ENCODE measurements at regions of chr18 and their contacts with region 1.

Region 1: DNA sequence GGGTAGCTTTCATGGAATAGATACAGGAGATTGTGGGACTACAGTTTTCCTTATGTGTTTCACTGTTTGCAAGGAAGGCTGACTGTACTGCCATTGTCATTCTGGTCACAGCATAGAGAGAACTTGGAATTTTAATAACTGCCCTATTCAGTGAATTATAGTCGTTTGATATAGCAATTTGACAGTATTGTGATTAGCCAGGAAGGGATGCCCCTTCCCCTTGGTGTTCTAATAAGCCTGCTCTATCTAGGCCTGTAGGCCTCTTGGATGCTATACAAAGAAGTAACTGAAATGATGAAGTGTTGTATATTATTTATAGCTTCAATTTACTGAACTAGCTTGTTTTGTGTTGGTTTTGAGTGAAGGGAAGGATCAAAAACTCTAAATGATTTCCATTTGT is 528.6 kb upstream of the CDH2 start:
- DNase-seq: no peak
- ATAC-seq: no peak
- H3K4me3 Mint-ChIP-seq: no peak overlapping the region
- H3K27ac Mint-ChIP-seq: no peak overlapping the region
- H3K4me1 Mint-ChIP-seq: no peaks in the 10 kb centered on the region
- H3K27me3 Mint-ChIP-seq: no peaks in the 10 kb centered on the region

Region 2: DNA sequence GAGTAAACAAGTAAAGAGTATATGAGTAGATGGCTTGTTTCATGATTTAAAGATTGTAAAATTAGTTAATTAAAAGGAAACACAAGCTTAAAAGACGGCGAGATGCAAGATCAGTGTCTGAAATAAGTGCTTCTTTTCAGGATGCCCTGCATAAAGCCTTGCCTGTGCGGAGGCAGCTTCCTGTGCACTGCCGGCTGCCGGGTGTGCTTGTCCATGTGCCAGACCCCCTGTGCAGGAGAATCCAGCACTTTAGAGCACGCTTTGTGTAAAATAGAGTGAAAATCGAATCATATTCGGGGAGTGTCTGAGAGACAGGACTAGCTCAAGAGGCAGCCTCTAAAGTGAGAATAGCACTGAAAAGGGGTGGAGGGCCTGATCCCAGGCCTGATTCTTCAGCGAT is 1675.1 kb before region 1 on chr18:
- CTCF ChIA-PET with region 1: no interaction called
- POLR2A ChIA-PET with region 1: no interaction called
- intact Hi-C with region 1: no loop called
- DNase-seq: no peak
- ATAC-seq: no peak
- H3K4me3 Mint-ChIP-seq: no peak overlapping the region
- H3K27ac Mint-ChIP-seq: no peak overlapping the region
- H3K4me1 Mint-ChIP-seq: no peaks in the 10 kb centered on the region
- H3K27me3 Mint-ChIP-seq: no peaks in the 10 kb centered on the region

Region 3: DNA sequence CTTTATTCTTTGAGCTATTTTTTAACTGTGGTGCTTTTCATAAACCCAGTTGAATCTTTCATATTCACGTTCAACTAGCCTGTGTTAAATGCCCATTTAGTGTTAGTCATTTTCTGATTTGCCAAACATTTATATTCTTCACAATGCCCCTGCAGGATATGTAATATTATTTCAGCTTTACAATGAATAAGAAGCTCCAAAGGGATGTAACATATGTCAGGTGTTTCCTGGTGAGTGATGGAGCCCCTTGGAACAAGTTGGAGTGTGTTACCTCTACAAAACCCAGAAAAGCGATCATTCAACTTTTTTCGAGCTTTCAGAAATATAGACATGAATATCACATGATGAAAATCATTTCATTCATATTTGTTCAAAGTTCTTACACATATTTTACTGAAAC is 57.5 kb before region 1 on chr18:
- CTCF ChIA-PET with region 1: no interaction called
- POLR2A ChIA-PET with region 1: no interaction called
- intact Hi-C with region 1: no loop called
- DNase-seq: no peak
- ATAC-seq: no peak
- H3K4me3 Mint-ChIP-seq: no peak overlapping the region
- H3K27ac Mint-ChIP-seq: no peak overlapping the region
- H3K4me1 Mint-ChIP-seq: no peaks in the 10 kb centered on the region
- H3K27me3 Mint-ChIP-seq: no peaks in the 10 kb centered on the region

Region 4: GRCh38 chr18:28757466-28758008 is 52.1 kb after region 1 on chr18:
- CTCF ChIA-PET with region 1: no interaction called
- POLR2A ChIA-PET with region 1: no interaction called
- intact Hi-C with region 1: loop called in 1 of 2 experiments (anchors 5 kb)
- DNase-seq: no peak
- ATAC-seq: no peak
- H3K4me3 Mint-ChIP-seq: no peak overlapping the region
- H3K27ac Mint-ChIP-seq: no peak overlapping the region
- H3K4me1 Mint-ChIP-seq: no peaks in the 10 kb centered on the region
- H3K27me3 Mint-ChIP-seq: no peaks in the 10 kb centered on the region